ENCODE measurements at regions of chr1 and their contacts with region 1.

Region 1: DNA sequence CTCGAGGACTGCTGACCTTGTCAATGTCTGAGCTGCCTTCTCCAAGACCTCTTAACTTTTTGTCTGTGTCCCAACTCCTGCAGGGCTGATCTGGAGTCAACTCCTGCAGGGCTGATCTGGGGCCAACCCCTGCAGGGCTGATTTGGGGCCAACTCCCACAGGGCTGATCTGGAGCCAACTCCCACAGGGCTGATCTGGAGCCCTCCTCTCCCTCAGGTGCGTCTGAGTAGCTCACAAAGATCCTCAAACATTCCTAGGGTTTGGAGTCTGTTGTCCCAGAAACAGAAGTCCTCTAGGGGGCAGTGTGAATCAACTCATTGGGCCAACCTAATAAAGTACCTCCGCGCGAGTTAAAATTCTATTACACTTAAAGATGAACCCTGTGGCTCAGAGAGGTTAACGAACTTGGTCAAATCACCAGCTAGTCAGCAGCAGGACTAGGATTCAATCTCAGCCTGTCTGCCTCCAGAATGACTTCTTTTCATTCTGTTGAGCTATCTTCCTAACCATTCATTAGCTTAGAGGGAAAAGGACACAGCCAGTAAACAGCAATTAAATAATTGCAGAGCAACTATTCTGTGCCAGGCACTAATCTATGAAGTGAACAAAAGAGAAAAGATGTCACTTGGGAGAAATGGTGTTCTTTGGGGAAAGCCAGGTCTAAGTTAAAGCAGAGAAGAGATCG is 17.2 kb upstream of the RLF start:
- DNase-seq: no peak
- H3K4me3 ChIP-seq: no peak overlapping the region
- CTCF ChIP-seq: peak; percentile 69

Region 2: GRCh38 chr1:40105028-40105427 is 39.0 kb before region 1 on chr1:
- CTCF ChIA-PET with region 1: interaction called, 15 read pairs
- POLR2A ChIA-PET with region 1: no interaction called
- DNase-seq: no peak
- H3K4me3 ChIP-seq: no peak overlapping the region
- CTCF ChIP-seq: no peak

Region 3: GRCh38 chr1:40224040-40224439 is 80.0 kb after region 1 on chr1:
- CTCF ChIA-PET with region 1: no interaction called
- POLR2A ChIA-PET with region 1: no interaction called
- DNase-seq: no peak
- H3K4me3 ChIP-seq: no peak overlapping the region
- CTCF ChIP-seq: no peak

Region 4: DNA sequence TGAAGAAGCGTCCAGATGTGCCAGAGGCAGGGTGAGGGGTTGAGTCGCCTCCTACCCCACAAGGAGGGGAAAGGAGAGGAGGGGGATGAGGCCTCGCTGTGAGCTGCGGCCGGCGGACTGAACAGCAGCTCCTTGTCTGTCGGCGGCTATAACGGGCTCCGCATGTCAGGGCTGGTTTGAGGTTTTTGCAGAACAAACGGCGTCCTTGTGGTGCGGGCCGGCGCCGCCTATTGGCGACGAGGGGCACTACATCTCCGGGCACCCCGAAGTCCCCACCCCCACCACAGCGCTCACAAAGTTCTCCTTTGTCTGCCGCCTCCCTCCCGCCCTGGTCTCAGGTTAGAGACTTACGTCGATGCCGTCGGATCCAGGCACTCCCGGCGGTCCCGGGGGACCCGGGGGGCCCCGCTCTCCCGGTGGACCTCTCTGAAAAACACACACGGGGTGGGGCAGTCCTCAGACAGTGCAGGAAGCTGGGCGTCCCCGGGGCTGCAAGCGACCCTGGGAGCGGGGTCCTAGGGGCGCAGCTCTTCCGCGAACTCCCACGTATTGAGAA is 171.3 kb after region 1 on chr1:
- CTCF ChIA-PET with region 1: interaction called, 39 read pairs
- POLR2A ChIA-PET with region 1: no interaction called
- DNase-seq: peak; percentile 10
- H3K4me3 ChIP-seq: peak overlapping the region; percentile 36
- CTCF ChIP-seq: peak; percentile 91

Region 5: GRCh38 chr1:40385437-40386358 is 241.7 kb after region 1 on chr1:
- CTCF ChIA-PET with region 1: interaction called, 11 read pairs
- POLR2A ChIA-PET with region 1: no interaction called
- DNase-seq: no peak
- H3K4me3 ChIP-seq: no peak overlapping the region
- CTCF ChIP-seq: no peak

Region 6: GRCh38 chr1:40411294-40411693 is 267.3 kb after region 1 on chr1:
- CTCF ChIA-PET with region 1: interaction called, 77 read pairs
- POLR2A ChIA-PET with region 1: no interaction called
- DNase-seq: no peak
- H3K4me3 ChIP-seq: no peak overlapping the region
- CTCF ChIP-seq: no peak

Measured in AG04449 (cell line).